ENCODE measurements at regions of chr13 and their contacts with region 1.

Region 1: GRCh38 chr13:87274209-87274819 is 396.9 kb upstream of the SLITRK5 start:
- DNase-seq: no peak
- H3K4me3 ChIP-seq: no peak overlapping the region
- H3K27ac ChIP-seq: no peak overlapping the region
- H3K4me1 ChIP-seq: no peaks in the 10 kb centered on the region
- H3K27me3 ChIP-seq: no peaks in the 10 kb centered on the region
- CTCF ChIP-seq: peak in 2 of 4 experiments; percentile 12 to 49
- EP300 ChIP-seq: no peak
- POLR2A ChIP-seq: no peak

Region 2: DNA sequence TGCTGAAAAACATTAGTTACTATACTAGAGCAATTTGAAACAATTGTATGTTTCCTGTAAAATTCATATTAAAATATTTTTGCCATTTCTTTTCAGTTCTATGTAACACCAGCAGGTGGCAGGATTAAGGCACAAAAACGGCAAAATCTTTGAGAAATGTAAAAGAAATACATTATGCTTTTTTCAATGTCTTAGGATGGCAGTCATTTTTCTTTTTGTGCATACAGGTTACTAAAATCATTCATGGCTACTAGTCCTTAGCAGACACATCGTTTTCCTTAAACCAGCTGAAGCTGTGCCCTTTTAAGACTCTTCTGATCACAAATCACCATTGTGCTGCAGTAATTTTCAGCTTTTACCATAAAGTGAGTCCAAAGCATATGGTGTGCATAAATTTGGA is 403.9 kb before region 1 on chr13:
- intact Hi-C with region 1: loop called (anchors 5 kb)
- DNase-seq: no peak
- H3K4me3 ChIP-seq: no peak overlapping the region
- H3K27ac ChIP-seq: no peak overlapping the region
- H3K4me1 ChIP-seq: no peaks in the 10 kb centered on the region
- H3K27me3 ChIP-seq: no peaks in the 10 kb centered on the region
- CTCF ChIP-seq: peak in 3 of 4 experiments; percentile 37 to 62 (median 47)
- EP300 ChIP-seq: no peak
- POLR2A ChIP-seq: no peak

Region 3: GRCh38 chr13:87426742-87427141 is 152.4 kb after region 1 on chr13:
- intact Hi-C with region 1: no loop called
- DNase-seq: no peak
- H3K4me3 ChIP-seq: no peak overlapping the region
- H3K27ac ChIP-seq: no peak overlapping the region
- H3K4me1 ChIP-seq: no peaks in the 10 kb centered on the region
- H3K27me3 ChIP-seq: no peaks in the 10 kb centered on the region
- CTCF ChIP-seq: no peak
- EP300 ChIP-seq: no peak
- POLR2A ChIP-seq: no peak